ENCODE measurements at regions of chr1 and their contacts with region 1.

Region 1: DNA sequence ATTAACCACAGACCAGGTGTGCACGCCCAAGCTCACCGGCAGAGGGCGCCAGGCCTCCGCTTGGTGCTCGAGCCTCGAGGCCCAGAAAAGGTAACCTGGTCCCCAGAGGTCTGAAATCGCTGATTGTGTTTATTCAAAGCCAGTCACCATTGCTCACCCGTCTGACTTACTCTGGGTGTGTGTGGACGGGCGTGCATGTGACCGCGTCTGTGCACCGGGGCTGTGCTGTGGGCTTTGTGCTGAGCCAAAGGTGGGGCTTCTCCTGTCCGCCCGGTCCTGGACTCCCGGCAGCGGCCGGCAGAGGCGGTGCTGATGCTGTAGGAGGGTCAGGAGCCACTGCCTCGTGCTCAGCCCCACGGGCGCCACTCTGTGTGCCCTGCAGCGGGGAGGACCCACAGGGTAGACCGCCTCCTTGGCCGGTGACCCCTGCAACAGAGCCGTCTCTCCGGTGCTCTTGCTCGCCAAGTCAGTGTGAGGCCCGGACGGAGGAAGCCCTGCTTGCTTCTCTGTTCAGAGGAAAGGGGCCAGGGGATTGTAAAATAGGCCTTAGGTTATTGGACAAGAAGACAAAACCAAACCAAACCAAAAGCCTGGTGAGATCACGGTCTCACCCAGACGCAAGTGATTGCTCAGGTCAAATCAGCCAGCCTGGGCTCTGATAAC is 32.0 kb upstream of the BTG2 start:
- DNase-seq: peak; percentile 90
- ATAC-seq: peak; percentile 78
- H3K4me3 Mint-ChIP-seq: peak overlapping the region; percentile 87
- H3K27ac Mint-ChIP-seq: peak overlapping the region; percentile 93
- H3K4me1 Mint-ChIP-seq: peaks cover 73% of the 10 kb centered on the region
- H3K27me3 Mint-ChIP-seq: no peaks in the 10 kb centered on the region
- CTCF ChIP-seq: peak; percentile 74

Region 2: DNA sequence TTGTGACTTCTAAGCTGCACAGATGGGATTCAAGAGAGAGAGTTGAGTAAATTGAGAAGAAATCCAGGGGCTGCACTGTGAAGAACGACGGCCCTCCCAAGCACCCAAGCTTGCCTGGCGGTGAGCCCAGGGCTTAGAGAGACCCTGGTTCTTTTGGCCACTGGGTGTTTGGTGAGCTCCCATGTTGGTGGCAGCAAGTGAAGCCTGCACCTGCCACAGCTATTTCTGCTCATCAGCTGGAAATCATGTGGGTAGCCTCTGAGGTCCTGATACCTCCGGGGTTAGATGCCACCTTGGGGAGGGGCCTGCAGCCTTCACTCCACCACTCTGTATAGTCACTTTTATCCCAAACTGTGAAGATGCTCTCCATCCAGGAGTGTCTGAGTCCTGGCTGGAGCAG is 25.8 kb after region 1 on chr1:
- CTCF ChIA-PET with region 1: interaction called, 22 read pairs
- POLR2A ChIA-PET with region 1: no interaction called
- intact Hi-C with region 1: no loop called
- DNase-seq: no peak
- ATAC-seq: peak; percentile 70
- H3K4me3 Mint-ChIP-seq: peak overlapping the region; percentile 61
- H3K27ac Mint-ChIP-seq: peak overlapping the region; percentile 91
- H3K4me1 Mint-ChIP-seq: peaks cover 95% of the 10 kb centered on the region
- H3K27me3 Mint-ChIP-seq: no peaks in the 10 kb centered on the region
- CTCF ChIP-seq: no peak

Region 3: GRCh38 chr1:203304919-203305808 is 31.8 kb after region 1 on chr1 and contains the start of gene BTG2:
- CTCF ChIA-PET with region 1: interaction called, 199 read pairs
- POLR2A ChIA-PET with region 1: interaction called, 1,942 read pairs
- intact Hi-C with region 1: loop called (anchors 1 kb)
- DNase-seq: peak; percentile 86
- ATAC-seq: peak; percentile 79
- H3K4me3 Mint-ChIP-seq: peak within 1 kb of the TSS; percentile 92
- H3K27ac Mint-ChIP-seq: peak within 1 kb of the TSS; percentile 98
- H3K4me1 Mint-ChIP-seq: peaks cover 70% of the 10 kb centered on the region
- H3K27me3 Mint-ChIP-seq: no peaks in the 10 kb centered on the region
- CTCF ChIP-seq: no peak
- total RNA-seq, gene BTG2: 419 and 448 TPM in 2 replicates

Region 4: GRCh38 chr1:203320591-203321272 is 47.4 kb after region 1 on chr1:
- CTCF ChIA-PET with region 1: interaction called, 89 read pairs
- POLR2A ChIA-PET with region 1: interaction called, 1,942 read pairs
- intact Hi-C with region 1: no loop called
- DNase-seq: peak; percentile 53
- ATAC-seq: peak; percentile 66
- H3K4me3 Mint-ChIP-seq: peak overlapping the region; percentile 72
- H3K27ac Mint-ChIP-seq: peak overlapping the region; percentile 96
- H3K4me1 Mint-ChIP-seq: peaks cover 90% of the 10 kb centered on the region
- H3K27me3 Mint-ChIP-seq: no peaks in the 10 kb centered on the region
- CTCF ChIP-seq: no peak

Region 5: DNA sequence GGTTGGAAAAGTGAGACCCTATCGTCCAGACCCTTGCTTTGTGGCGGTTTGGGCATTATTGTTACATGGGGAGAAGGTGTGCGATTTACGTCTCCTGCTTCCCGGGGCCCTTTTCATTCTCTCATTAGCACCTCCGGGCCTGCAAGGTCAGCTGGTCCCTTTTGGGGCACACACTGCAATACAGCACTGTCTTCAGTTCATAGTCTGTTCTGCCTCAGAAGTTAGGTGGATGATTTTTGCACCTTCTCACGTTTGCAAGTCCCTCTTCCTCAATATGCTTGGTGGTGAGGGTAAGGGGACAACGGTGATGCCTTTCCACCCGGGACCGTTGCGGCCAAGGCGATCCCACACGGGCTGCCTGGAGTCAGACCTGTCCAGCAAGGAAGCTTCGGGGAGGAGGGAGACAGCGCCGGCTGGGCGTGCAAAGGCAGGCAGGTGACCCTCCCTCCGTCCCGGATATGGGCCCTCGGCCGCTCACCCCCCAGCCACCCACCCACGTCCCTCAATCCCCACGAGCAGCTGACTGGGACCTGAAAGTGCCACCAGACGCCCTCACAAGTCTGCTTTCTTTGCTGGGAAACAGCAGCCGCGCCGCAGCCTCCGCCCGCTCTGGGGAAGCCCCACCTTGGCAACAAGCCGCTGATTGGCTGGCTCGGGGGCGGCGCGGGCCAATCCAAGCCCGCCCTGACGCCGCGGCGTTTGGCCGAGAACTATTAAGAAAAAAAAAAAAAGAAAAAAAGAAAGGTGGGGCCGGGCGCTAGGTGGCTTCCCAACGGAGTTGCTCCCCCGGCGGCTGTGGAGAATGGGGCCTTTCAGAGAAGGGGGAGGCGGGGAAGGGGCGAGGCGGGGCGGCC is 53.7 kb after region 1 on chr1:
- CTCF ChIA-PET with region 1: interaction called, 525 read pairs
- POLR2A ChIA-PET with region 1: interaction called, 1,136 read pairs
- intact Hi-C with region 1: loop called (anchors 1 kb)
- DNase-seq: peak; percentile 91
- ATAC-seq: peak; percentile 79
- H3K4me3 Mint-ChIP-seq: peak overlapping the region; percentile 84
- H3K27ac Mint-ChIP-seq: peak overlapping the region; percentile 96
- H3K4me1 Mint-ChIP-seq: peaks cover 77% of the 10 kb centered on the region
- H3K27me3 Mint-ChIP-seq: no peaks in the 10 kb centered on the region
- CTCF ChIP-seq: no peak

Region 6: DNA sequence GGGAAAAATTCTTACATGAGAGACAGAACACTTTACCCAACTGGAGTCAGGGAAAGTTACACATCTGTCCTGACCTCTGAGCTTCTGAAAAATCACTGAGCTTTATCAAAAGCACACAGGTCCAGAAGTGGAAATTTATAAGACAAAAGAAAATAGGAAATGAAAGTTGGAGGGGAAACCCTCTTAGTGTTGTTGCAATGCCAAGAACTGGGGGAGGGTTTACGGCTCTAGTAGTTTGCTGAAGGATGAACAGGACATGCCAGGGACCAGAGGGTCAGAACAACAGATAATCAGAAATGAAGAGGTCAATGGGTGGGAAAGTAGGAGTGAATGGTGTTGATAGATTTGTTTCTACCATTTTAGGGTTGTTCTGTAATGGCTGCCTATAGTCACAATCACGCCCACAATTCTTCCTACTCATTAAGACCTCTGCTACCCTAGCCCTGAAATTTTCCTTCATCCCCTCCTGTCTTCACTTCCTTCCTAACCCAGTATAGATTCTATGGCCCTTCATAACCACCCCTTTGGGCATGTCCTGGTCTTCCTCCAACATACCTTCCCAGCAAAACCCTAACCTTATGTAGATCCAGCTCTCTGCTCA is 107.9 kb after region 1 on chr1:
- CTCF ChIA-PET with region 1: interaction called, 4 read pairs
- POLR2A ChIA-PET with region 1: no interaction called
- intact Hi-C with region 1: loop called (anchors 5 kb)
- DNase-seq: no peak
- ATAC-seq: peak; percentile 89
- H3K4me3 Mint-ChIP-seq: peak overlapping the region; percentile 59
- H3K27ac Mint-ChIP-seq: peak overlapping the region; percentile 88
- H3K4me1 Mint-ChIP-seq: peaks cover 53% of the 10 kb centered on the region
- H3K27me3 Mint-ChIP-seq: no peaks in the 10 kb centered on the region
- CTCF ChIP-seq: no peak

Measured in activated B cell treated with CpG ODN at 0.5 μM for 24 hours (primary cell).